ENCODE measurements at regions of chr18 and their contacts with region 1.

Region 1: DNA sequence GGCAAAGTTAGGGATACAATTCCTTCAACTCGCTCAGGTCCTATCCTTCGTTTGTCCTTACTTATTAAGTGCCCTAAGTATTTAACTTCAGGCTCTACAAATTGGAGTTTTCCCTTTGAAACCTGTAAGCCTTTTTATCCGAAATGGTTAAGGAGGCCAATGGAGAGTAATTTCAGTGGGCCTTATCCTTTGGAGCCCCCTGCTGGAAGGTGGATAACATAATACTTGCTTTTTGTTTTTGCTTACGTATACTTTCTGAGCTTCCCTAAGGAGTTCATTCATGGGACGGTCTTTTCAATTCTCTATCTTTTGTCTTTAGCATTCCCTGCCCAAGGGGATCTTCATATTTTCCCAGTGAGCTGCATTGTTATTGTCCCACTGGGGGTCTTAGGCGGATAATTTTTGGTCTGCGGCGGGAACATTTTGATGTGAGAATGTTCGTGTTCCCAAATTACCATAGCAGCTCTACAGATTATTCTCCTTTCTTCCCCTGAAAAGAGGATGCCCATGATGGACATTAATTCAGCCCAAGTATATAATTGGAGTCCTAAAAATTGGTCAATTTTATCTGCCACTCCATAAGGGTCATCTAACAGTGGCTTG is 34.4 kb upstream of the TRAPPC8 start:
- DNase-seq: no peak
- ATAC-seq: peak; percentile 80
- H3K4me3 ChIP-seq: no peak overlapping the region
- H3K27ac ChIP-seq: no peak overlapping the region
- H3K4me1 ChIP-seq: no peaks in the 10 kb centered on the region
- H3K27me3 ChIP-seq: no peaks in the 10 kb centered on the region
- CTCF ChIP-seq: peak; percentile 49 to 65 (median 50); a peak in 5 of 6 replicates
- EP300 ChIP-seq: no peak
- POLR2A ChIP-seq: no peak
- RAD21 ChIP-seq: peak; percentile 74

Region 2: GRCh38 chr18:31555971-31556747 is 421.2 kb before region 1 on chr18:
- CTCF ChIA-PET with region 1: interaction called, 4 read pairs
- POLR2A ChIA-PET with region 1: no interaction called
- RAD21 ChIA-PET with region 1: interaction called, 4 read pairs
- SMC1A ChIA-PET with region 1: interaction called, 9 read pairs
- in situ Hi-C with region 1: no loop called
- intact Hi-C with region 1: loop called (anchors 5 kb)
- DNase-seq: peak; percentile 39
- ATAC-seq: peak; percentile 88
- H3K4me3 ChIP-seq: no peak overlapping the region
- H3K27ac ChIP-seq: no peak overlapping the region
- H3K4me1 ChIP-seq: no peaks in the 10 kb centered on the region
- H3K27me3 ChIP-seq: no peaks in the 10 kb centered on the region
- CTCF ChIP-seq: peak; percentile 62 to 79 (median 72); a peak in 5 of 6 replicates
- EP300 ChIP-seq: no peak
- POLR2A ChIP-seq: no peak
- RAD21 ChIP-seq: peak; percentile 96

Region 3: DNA sequence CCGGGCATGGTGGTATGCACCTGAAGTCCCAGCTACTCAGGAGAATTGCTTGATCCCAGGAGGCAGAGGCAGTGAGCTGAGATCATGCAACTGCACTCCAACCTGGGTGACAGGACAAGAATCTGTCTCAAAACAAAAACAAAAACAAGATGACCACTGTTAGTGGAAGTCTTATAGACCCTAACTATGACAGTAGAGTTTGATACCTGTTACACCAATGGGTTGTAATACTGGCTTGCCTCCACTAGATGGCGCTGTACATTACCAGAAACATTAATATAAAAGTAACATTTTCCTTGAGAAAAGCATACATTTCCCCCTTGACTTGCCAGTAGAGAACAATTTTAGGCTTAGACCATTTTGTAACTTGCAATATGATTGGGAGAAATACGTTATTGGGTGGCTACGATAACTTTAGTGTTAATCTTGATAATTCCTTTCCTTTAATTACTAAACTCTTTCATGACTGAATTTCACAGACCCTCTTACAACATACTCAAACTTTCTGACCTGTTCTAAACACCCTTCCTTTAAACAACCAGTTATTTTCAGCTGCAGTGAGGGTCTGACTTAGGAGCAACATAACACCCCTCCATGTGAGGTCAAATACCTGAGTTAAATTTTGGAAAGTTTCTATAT is 236.2 kb before region 1 on chr18:
- CTCF ChIA-PET with region 1: interaction called, 13 read pairs
- POLR2A ChIA-PET with region 1: no interaction called
- RAD21 ChIA-PET with region 1: interaction called, 4 read pairs
- SMC1A ChIA-PET with region 1: interaction called, 8 read pairs
- in situ Hi-C with region 1: no loop called
- intact Hi-C with region 1: loop called (anchors 5 kb)
- DNase-seq: peak; percentile 16
- ATAC-seq: peak; percentile 72
- H3K4me3 ChIP-seq: no peak overlapping the region
- H3K27ac ChIP-seq: no peak overlapping the region
- H3K4me1 ChIP-seq: no peaks in the 10 kb centered on the region
- H3K27me3 ChIP-seq: no peaks in the 10 kb centered on the region
- CTCF ChIP-seq: peak; percentile 59 to 77 (median 74)
- EP300 ChIP-seq: no peak
- POLR2A ChIP-seq: no peak
- RAD21 ChIP-seq: peak; percentile 72

Region 4: GRCh38 chr18:31942999-31943865 is 34.1 kb before region 1 on chr18 and contains the start of gene TRAPPC8:
- CTCF ChIA-PET with region 1: interaction called, 15 read pairs
- POLR2A ChIA-PET with region 1: no interaction called
- RAD21 ChIA-PET with region 1: interaction called, 6 read pairs
- SMC1A ChIA-PET with region 1: interaction called, 6 read pairs
- in situ Hi-C with region 1: no loop called
- intact Hi-C with region 1: no loop called
- DNase-seq: peak; percentile 87
- ATAC-seq: peak; percentile 92
- H3K4me3 ChIP-seq: peak within 1 kb of the TSS; percentile 99
- H3K27ac ChIP-seq: peak within 1 kb of the TSS; percentile 87
- H3K4me1 ChIP-seq: no peaks in the 10 kb centered on the region
- H3K27me3 ChIP-seq: no peaks in the 10 kb centered on the region
- CTCF ChIP-seq: peak in 2 of 3 experiments; percentile 20 to 35; a peak in 2 of 6 replicates
- EP300 ChIP-seq: peak; percentile 9 to 61
- POLR2A ChIP-seq: peak; percentile 96
- RAD21 ChIP-seq: peak; percentile 36; the same call in 1 of the 2 replicates
- polyA plus RNA-seq, gene TRAPPC8: 13.0 to 17.2 TPM

Region 5: GRCh38 chr18:31990823-31991222 is 13.5 kb after region 1 on chr18:
- CTCF ChIA-PET with region 1: interaction called, 22 read pairs
- POLR2A ChIA-PET with region 1: no interaction called
- RAD21 ChIA-PET with region 1: interaction called, 9 read pairs
- SMC1A ChIA-PET with region 1: interaction called, 6 read pairs
- in situ Hi-C with region 1: no loop called
- intact Hi-C with region 1: no loop called
- DNase-seq: peak; percentile 62
- ATAC-seq: peak; percentile 100
- H3K4me3 ChIP-seq: no peak overlapping the region
- H3K27ac ChIP-seq: no peak overlapping the region
- H3K4me1 ChIP-seq: peaks cover 12% of the 10 kb centered on the region
- H3K27me3 ChIP-seq: no peaks in the 10 kb centered on the region
- CTCF ChIP-seq: no peak
- EP300 ChIP-seq: no peak
- POLR2A ChIP-seq: no peak
- RAD21 ChIP-seq: no peak

Region 6: DNA sequence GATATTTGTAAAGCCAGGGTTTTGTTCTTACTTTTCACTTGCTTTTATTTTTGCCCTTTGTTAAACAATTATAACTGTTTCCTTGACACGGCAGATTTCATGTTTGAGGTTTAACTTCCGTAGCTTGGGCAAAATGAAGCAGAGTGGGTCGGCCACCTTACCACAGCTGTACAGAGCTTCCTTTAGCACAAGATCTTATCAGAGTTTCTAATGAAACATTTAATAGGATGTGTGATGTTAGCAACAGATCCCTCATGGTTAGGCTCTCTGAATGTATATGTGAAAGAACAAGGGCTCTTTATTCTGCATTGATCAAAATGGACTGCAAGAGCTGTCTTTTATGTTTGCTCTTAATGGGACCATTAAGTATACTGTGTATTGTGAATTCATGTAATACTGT is 63.6 kb after region 1 on chr18:
- CTCF ChIA-PET with region 1: no interaction called
- POLR2A ChIA-PET with region 1: no interaction called
- RAD21 ChIA-PET with region 1: no interaction called
- SMC1A ChIA-PET with region 1: no interaction called
- in situ Hi-C with region 1: no loop called
- intact Hi-C with region 1: no loop called
- DNase-seq: no peak
- ATAC-seq: peak; percentile 54
- H3K4me3 ChIP-seq: no peak overlapping the region
- H3K27ac ChIP-seq: no peak overlapping the region
- H3K4me1 ChIP-seq: peaks cover 3% of the 10 kb centered on the region; the same call in 1 of the 2 replicates
- H3K27me3 ChIP-seq: no peaks in the 10 kb centered on the region
- CTCF ChIP-seq: no peak
- EP300 ChIP-seq: no peak
- POLR2A ChIP-seq: no peak
- RAD21 ChIP-seq: no peak

Region 7: GRCh38 chr18:32072321-32072720 is 95.0 kb after region 1 on chr18:
- CTCF ChIA-PET with region 1: interaction called, 10 read pairs
- POLR2A ChIA-PET with region 1: no interaction called
- RAD21 ChIA-PET with region 1: no interaction called
- SMC1A ChIA-PET with region 1: interaction called, 3 read pairs
- in situ Hi-C with region 1: no loop called
- intact Hi-C with region 1: no loop called
- DNase-seq: no peak
- ATAC-seq: peak; percentile 73
- H3K4me3 ChIP-seq: no peak overlapping the region
- H3K27ac ChIP-seq: no peak overlapping the region
- H3K4me1 ChIP-seq: no peaks in the 10 kb centered on the region
- H3K27me3 ChIP-seq: no peaks in the 10 kb centered on the region
- CTCF ChIP-seq: peak; percentile 38 to 51 (median 47); a peak in 4 of 6 replicates
- EP300 ChIP-seq: no peak
- POLR2A ChIP-seq: no peak
- RAD21 ChIP-seq: peak; percentile 69

Region 8: GRCh38 chr18:32122039-32122438 is 144.7 kb after region 1 on chr18:
- CTCF ChIA-PET with region 1: no interaction called
- POLR2A ChIA-PET with region 1: no interaction called
- RAD21 ChIA-PET with region 1: no interaction called
- SMC1A ChIA-PET with region 1: no interaction called
- in situ Hi-C with region 1: no loop called
- intact Hi-C with region 1: no loop called
- DNase-seq: no peak
- ATAC-seq: no peak
- H3K4me3 ChIP-seq: no peak overlapping the region
- H3K27ac ChIP-seq: no peak overlapping the region
- H3K4me1 ChIP-seq: no peaks in the 10 kb centered on the region
- H3K27me3 ChIP-seq: no peaks in the 10 kb centered on the region
- CTCF ChIP-seq: no peak
- EP300 ChIP-seq: no peak
- POLR2A ChIP-seq: no peak
- RAD21 ChIP-seq: no peak

Measured in GM12878 (cell line).